GM18951 (cell line): ENCODE measurements at regions of chr10 and their contacts with region 1.

Region 1: DNA sequence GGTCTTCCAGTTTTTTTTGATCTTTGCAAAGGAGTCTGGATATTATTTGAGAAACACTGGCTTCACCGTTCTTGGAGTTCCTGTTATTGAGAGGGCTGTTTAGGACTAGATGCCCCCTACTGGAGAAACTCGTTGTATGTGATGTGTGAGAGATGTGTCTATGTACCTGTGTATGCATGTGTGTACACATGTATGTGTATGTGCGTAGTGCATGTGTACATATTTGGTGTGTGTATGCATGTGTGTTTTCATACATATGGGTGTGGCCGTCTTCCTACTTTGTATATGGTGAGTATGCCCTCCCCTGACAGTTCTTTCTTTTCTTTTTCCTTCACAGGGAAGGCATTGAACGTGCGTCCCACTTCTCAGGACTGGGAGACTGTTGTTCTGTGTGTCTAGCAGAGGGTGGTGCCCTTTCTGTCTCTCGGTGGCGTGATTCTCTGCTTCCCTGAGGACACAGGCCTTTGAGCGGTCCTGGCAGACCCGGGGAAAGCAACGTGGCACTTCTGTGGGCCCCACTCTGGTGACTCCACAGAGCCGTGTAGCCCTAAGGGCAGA is 3.0 kb upstream of the CALHM3 start:
- POLR2A ChIP-seq: no peak

Region 2: DNA sequence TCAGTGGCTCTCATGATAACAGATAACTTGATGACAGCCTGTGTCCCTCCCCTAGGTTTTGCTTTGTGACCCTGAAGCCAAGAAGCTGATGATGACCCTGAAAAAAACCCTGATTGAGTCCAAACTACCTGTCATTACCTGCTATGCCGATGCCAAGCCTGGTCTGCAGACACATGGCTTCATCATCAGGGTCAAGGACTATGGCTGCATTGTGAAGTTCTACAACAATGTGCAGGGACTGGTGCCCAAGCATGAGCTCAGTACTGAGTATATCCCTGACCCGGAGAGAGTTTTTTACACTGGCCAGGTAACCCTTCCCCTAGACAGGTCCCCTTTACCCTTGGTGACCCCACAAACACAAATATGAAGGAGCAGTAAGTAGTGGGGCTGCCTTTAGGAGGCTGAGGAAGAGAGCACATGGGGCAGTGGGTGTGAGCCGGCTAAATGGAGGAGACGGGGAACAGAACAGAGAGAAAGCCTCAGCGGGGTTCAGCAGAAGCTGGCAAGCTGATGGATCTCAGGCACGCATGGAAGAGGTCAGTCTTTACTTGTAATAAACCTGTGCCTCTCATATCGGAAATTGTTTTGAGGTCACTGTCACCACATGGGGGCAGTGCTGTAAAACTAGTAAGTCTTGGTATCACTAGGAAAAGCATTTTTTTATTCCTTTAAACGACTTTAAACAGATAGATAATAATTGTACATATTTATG is 65.5 kb before region 1 on chr10:
- in situ Hi-C with region 1: loop called (anchors 5 kb)
- POLR2A ChIP-seq: no peak